Tibial artery (tissue), 4 donors: ENCODE measurements at regions of chr3 and their contacts with region 1.

Region 1: GRCh38 chr3:161274719-161275298 is 53.7 kb downstream of the NMD3 start:
- DNase-seq: no peak
- H3K4me3 ChIP-seq: no peak overlapping the region
- H3K27ac ChIP-seq: no peak overlapping the region
- H3K4me1 ChIP-seq: no peaks in the 10 kb centered on the region
- H3K27me3 ChIP-seq: no peaks in the 10 kb centered on the region
- CTCF ChIP-seq: peak; percentile 24 to 42

Region 2: DNA sequence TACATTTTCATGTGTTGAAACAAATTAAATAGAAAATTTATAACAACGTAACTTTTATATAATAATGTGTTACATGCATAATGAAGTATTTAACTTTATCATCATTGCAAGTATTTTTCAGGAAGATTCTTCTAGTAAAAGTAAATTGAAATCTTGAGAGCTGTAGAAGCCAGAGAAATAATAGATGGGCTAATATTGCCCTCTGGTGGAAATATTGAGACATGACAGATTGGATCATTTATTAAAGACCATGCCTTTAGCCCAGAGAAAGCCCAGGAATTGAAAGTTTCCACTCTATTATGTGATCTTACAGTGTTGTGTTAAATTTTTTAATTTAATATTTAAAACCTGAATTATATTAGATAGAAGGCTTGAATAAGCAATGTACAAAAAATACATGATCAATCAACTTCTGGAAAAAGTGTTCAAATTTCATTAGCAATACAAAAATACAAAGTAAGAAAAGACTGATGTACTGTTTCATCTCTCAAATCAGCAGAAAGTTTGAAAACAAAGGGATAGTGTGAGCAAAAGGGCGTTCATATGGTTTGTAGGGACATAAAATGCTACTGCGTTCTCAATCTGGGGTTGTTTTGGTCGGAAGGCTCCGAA is 149.2 kb after region 1 on chr3:
- intact Hi-C with region 1: loop called (anchors 5 kb)
- DNase-seq: no peak
- H3K4me3 ChIP-seq: no peak overlapping the region
- H3K27ac ChIP-seq: no peak overlapping the region
- H3K4me1 ChIP-seq: no peaks in the 10 kb centered on the region
- H3K27me3 ChIP-seq: no peaks in the 10 kb centered on the region
- CTCF ChIP-seq: peak; percentile 70 to 80

Region 3: GRCh38 chr3:161838021-161838420 is 563.2 kb after region 1 on chr3:
- intact Hi-C with region 1: no loop called
- DNase-seq: no peak
- H3K4me3 ChIP-seq: no peak overlapping the region
- H3K27ac ChIP-seq: no peak overlapping the region
- H3K4me1 ChIP-seq: no peaks in the 10 kb centered on the region
- H3K27me3 ChIP-seq: no peaks in the 10 kb centered on the region
- CTCF ChIP-seq: no peak